Activated CD4-positive, alpha-beta memory T cell treated with anti-CD3 and anti-CD28 coated beads for 36 hours (primary cell): ENCODE measurements at regions of chr16 and their contacts with region 1.

Region 1: GRCh38 chr16:8936421-8936820 is 27.3 kb downstream of the USP7 start:
- DNase-seq: peak; percentile 92
- H3K4me3 Mint-ChIP-seq: no peak overlapping the region
- H3K27ac Mint-ChIP-seq: peak overlapping the region; percentile 66
- H3K4me1 Mint-ChIP-seq: peaks cover 80% of the 10 kb centered on the region
- H3K27me3 Mint-ChIP-seq: no peaks in the 10 kb centered on the region

Region 2: DNA sequence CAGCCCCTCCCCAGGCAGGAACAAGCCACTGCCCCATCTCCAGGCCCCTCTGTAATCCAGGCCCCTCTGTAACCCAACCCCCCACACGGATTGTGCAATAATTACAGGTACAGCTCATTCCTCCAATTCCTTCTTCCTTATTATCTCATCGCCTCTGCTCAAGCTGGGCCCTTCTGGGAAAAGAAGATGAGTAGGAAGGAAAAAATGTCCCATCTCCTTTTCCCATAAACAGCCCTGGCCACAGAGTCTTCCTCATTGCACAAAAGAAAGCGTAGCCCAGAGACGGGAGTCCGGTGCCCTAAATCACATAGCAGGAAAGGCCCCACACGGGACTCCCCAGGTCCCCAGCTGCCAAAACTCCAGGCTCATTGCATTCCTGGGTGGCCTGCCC is 57.9 kb before region 1 on chr16:
- CTCF ChIA-PET with region 1: interaction called, 44 read pairs
- POLR2A ChIA-PET with region 1: no interaction called
- intact Hi-C with region 1: no loop called
- DNase-seq: no peak
- H3K4me3 Mint-ChIP-seq: no peak overlapping the region
- H3K27ac Mint-ChIP-seq: no peak overlapping the region
- H3K4me1 Mint-ChIP-seq: peaks cover 2% of the 10 kb centered on the region
- H3K27me3 Mint-ChIP-seq: no peaks in the 10 kb centered on the region

Region 3: GRCh38 chr16:8892101-8892575 is 44.3 kb before region 1 on chr16:
- CTCF ChIA-PET with region 1: interaction called, 51 read pairs
- POLR2A ChIA-PET with region 1: interaction called, 3 read pairs
- intact Hi-C with region 1: no loop called
- DNase-seq: peak; percentile 54
- H3K4me3 Mint-ChIP-seq: peak overlapping the region; percentile 58
- H3K27ac Mint-ChIP-seq: peak overlapping the region; percentile 97
- H3K4me1 Mint-ChIP-seq: peaks cover 26% of the 10 kb centered on the region
- H3K27me3 Mint-ChIP-seq: no peaks in the 10 kb centered on the region

Region 4: GRCh38 chr16:8905168-8905762 is 31.2 kb before region 1 on chr16:
- CTCF ChIA-PET with region 1: interaction called, 27 read pairs
- POLR2A ChIA-PET with region 1: interaction called, 5 read pairs
- intact Hi-C with region 1: loop called (anchors 1 kb)
- DNase-seq: no peak
- H3K4me3 Mint-ChIP-seq: no peak overlapping the region
- H3K27ac Mint-ChIP-seq: peak overlapping the region; percentile 8
- H3K4me1 Mint-ChIP-seq: peaks cover 18% of the 10 kb centered on the region
- H3K27me3 Mint-ChIP-seq: no peaks in the 10 kb centered on the region

Region 5: DNA sequence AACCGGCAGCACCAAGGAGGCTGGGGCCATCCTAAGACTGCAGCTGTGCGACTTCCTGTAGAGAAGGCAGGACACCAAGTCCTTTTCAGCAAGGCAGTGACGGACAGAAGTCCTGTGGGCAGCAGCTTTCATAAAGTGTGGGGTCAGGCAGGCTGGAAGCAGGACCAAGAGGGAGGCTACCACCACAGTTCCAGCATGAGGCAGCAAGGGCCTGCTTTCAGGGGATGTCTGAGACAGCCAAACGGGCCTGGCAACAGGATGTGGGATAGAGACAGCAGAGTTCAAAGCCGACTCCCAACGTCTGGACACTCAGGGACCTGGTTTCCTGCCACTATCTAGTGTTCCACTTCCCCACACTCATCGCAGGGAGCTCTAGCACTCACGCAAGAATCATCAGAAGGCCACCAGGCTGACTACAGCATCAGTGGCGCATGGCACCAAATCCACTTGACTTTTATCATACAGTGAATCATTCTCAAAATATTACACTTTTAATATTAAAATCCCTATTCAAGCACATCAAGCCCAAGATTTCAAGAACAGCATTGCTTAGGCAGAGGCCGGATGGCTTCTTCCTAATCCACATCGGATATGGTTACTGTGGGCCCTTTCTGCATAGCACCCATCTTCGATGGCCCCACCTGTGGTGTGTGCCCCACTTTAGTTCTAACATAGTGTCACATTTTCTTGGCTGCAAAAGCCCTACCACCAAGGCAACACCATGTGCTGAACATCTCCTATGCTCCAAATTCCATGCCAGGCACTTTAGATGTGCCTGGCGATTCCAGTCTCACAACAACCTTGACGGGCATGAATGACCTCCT is 22.1 kb after region 1 on chr16:
- CTCF ChIA-PET with region 1: interaction called, 27 read pairs
- POLR2A ChIA-PET with region 1: interaction called, 3 read pairs
- intact Hi-C with region 1: loop called (anchors 2 kb)
- DNase-seq: peak; percentile 57
- H3K4me3 Mint-ChIP-seq: peak overlapping the region; percentile 54
- H3K27ac Mint-ChIP-seq: peak overlapping the region; percentile 86
- H3K4me1 Mint-ChIP-seq: peaks cover 81% of the 10 kb centered on the region
- H3K27me3 Mint-ChIP-seq: no peaks in the 10 kb centered on the region

Region 6: GRCh38 chr16:9134739-9135138 is 198.3 kb after region 1 on chr16:
- CTCF ChIA-PET with region 1: interaction called, 16 read pairs
- POLR2A ChIA-PET with region 1: no interaction called
- intact Hi-C with region 1: no loop called
- DNase-seq: peak; percentile 79
- H3K4me3 Mint-ChIP-seq: no peak overlapping the region
- H3K27ac Mint-ChIP-seq: no peak overlapping the region
- H3K4me1 Mint-ChIP-seq: peaks cover 12% of the 10 kb centered on the region
- H3K27me3 Mint-ChIP-seq: peaks cover 8% of the 10 kb centered on the region

Region 7: DNA sequence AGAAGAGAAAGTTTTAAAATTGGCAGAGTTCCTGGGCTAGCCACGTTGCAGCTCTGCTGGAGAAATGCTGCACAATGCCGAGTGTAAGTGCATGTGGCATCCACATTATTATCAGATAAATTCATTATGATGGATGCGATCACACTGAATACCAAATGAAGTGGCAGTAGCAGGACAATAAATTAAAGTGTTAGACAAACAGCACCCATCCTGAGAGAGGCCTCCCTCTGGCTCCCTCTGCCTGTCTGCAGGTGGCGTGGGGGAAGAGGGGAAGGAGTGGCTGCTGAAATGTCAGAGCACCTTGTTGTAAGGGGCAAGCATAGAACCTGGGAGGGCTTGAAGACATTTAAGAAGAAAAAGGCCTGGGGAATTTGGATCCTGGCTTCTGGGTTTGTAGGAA is 479.1 kb after region 1 on chr16:
- CTCF ChIA-PET with region 1: no interaction called
- POLR2A ChIA-PET with region 1: no interaction called
- intact Hi-C with region 1: no loop called
- DNase-seq: no peak
- H3K4me3 Mint-ChIP-seq: no peak overlapping the region
- H3K27ac Mint-ChIP-seq: no peak overlapping the region
- H3K4me1 Mint-ChIP-seq: no peaks in the 10 kb centered on the region
- H3K27me3 Mint-ChIP-seq: no peaks in the 10 kb centered on the region